Keratinocyte (primary cell): ENCODE measurements at regions of chr1 and their contacts with region 1.

Region 1: DNA sequence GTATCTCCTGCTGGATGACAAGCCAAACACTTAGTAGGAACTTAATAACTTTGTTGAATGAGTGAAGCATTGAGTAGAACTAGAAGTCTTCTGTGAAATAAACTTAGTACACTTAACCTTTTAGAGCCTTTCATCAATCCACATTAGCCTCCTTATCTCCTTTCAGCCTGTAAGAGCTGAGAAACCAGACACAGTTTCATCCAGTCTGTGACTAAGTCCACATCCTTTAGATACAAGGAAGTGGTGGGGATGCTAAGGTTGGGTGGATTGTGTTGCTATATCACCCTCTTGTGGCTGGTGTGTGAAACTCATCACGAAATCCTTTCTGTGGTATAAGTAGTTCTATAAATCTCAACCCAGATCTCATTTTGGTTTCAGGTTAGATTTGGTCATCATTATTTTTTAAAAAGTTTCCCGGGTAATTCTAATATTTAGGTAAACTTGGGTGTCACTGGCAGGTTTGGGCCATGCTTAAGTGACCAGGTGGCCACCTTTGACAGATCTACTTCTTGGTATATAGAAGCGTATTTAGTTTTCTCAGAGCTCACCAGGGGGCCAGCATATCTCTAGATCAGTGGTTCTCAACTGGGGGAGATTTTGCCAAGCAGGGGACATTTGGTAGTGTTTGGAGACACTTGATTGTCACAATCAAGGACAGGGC is 27.8 kb upstream of the CD84 start:
- DNase-seq: peak; percentile 36
- H3K4me3 ChIP-seq: no peak overlapping the region
- H3K27ac ChIP-seq: no peak overlapping the region
- H3K4me1 ChIP-seq: no peaks in the 10 kb centered on the region
- H3K27me3 ChIP-seq: peaks cover 14% of the 10 kb centered on the region
- CTCF ChIP-seq: peak; percentile 66 to 84 (median 78)

Region 2: GRCh38 chr1:160428655-160429054 is 178.5 kb before region 1 on chr1:
- dilution Hi-C with region 1: loop called (anchors 25 kb)
- DNase-seq: no peak
- H3K4me3 ChIP-seq: no peak overlapping the region
- H3K27ac ChIP-seq: no peak overlapping the region
- H3K4me1 ChIP-seq: peaks cover 13% of the 10 kb centered on the region
- H3K27me3 ChIP-seq: no peaks in the 10 kb centered on the region
- CTCF ChIP-seq: peak; percentile 46 to 83 (median 63)

Region 3: GRCh38 chr1:160519642-160520435 is 87.3 kb before region 1 on chr1:
- dilution Hi-C with region 1: no loop called
- DNase-seq: no peak
- H3K4me3 ChIP-seq: peak overlapping the region in 1 of 3 experiments; percentile 41
- H3K27ac ChIP-seq: no peak overlapping the region
- H3K4me1 ChIP-seq: peaks cover 17% of the 10 kb centered on the region
- H3K27me3 ChIP-seq: no peaks in the 10 kb centered on the region
- CTCF ChIP-seq: no peak